ENCODE measurements at regions of chr11 and their contacts with region 1.

Region 1: GRCh38 chr11:73177778-73178577 is 35.9 kb upstream of the FCHSD2 start:
- DNase-seq: peak; percentile 68
- ATAC-seq: peak; percentile 99
- H3K4me3 ChIP-seq: no peak overlapping the region
- H3K27ac ChIP-seq: peak overlapping the region; percentile 0
- H3K4me1 ChIP-seq: peaks cover 44% of the 10 kb centered on the region
- H3K27me3 ChIP-seq: no peaks in the 10 kb centered on the region
- CTCF ChIP-seq: peak; percentile 82 to 95 (median 91)
- EP300 ChIP-seq: no peak
- POLR2A ChIP-seq: no peak
- RAD21 ChIP-seq: peak; percentile 99

Region 2: GRCh38 chr11:72793425-72794367 is 384.3 kb before region 1 on chr11 and contains the start of gene STARD10:
- CTCF ChIA-PET with region 1: interaction called, 16 read pairs
- POLR2A ChIA-PET with region 1: no interaction called
- RAD21 ChIA-PET with region 1: interaction called, 13 read pairs
- SMC1A ChIA-PET with region 1: interaction called, 9 read pairs
- in situ Hi-C with region 1: no loop called
- intact Hi-C with region 1: no loop called
- DNase-seq: peak; percentile 79
- ATAC-seq: peak; percentile 98
- H3K4me3 ChIP-seq: peak within 1 kb of the TSS; percentile 66
- H3K27ac ChIP-seq: peak within 1 kb of the TSS; percentile 77
- H3K4me1 ChIP-seq: peaks cover 11% of the 10 kb centered on the region
- H3K27me3 ChIP-seq: no peaks in the 10 kb centered on the region
- CTCF ChIP-seq: peak; percentile 84 to 95 (median 95)
- EP300 ChIP-seq: no peak
- POLR2A ChIP-seq: peak; percentile 81
- RAD21 ChIP-seq: peak; percentile 58
- polyA plus RNA-seq, gene STARD10: 0.15 to 0.21 TPM

Region 3: DNA sequence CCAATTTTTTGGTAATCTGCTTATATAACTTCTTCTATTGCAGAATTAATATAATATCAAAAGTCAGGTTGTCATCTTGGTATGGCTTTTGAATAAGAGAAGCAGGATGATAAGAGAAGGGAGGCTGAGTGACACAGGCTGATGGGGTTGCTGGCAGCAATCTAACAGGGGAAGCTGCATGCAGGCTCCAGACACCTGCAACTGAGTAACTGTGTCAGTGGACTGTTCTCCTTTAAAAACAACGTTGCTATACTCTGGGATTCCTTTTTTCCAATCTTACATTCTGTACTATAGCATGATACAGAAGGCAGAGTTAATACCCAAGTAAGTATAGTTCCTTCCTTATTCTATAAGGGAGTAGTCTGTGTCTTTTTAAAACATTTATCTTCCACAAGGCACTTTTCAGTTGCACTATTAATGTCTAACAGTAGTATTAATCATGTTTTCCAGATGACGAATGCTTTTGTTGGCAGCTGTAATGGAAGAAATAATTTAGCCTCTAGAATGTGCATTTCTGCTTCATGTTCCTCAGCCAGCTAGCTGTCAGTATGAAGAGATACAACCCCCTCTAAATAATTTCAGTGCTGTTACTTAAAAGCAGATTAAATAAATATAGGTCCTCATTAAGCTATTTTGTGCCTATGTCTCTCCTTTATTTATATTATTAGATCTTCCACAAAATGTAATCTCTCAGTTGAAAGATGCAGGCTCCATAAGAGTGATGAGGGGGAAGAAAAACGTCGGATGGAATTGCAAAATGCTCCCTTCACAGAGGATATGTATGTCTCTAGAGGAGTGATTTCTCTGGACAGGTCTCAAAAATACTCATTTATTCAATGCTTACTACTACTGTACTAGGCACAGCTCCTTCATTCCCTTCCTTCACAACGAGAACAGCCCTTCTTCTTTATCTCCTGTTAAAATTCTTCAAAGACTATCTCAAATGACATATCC is 313.0 kb before region 1 on chr11:
- CTCF ChIA-PET with region 1: interaction called, 14 read pairs
- POLR2A ChIA-PET with region 1: no interaction called
- RAD21 ChIA-PET with region 1: interaction called, 5 read pairs
- SMC1A ChIA-PET with region 1: interaction called, 8 read pairs
- in situ Hi-C with region 1: no loop called
- intact Hi-C with region 1: no loop called
- DNase-seq: no peak
- ATAC-seq: no peak
- H3K4me3 ChIP-seq: no peak overlapping the region
- H3K27ac ChIP-seq: no peak overlapping the region
- H3K4me1 ChIP-seq: no peaks in the 10 kb centered on the region
- H3K27me3 ChIP-seq: no peaks in the 10 kb centered on the region
- CTCF ChIP-seq: no peak
- EP300 ChIP-seq: no peak
- POLR2A ChIP-seq: no peak
- RAD21 ChIP-seq: no peak

Region 4: DNA sequence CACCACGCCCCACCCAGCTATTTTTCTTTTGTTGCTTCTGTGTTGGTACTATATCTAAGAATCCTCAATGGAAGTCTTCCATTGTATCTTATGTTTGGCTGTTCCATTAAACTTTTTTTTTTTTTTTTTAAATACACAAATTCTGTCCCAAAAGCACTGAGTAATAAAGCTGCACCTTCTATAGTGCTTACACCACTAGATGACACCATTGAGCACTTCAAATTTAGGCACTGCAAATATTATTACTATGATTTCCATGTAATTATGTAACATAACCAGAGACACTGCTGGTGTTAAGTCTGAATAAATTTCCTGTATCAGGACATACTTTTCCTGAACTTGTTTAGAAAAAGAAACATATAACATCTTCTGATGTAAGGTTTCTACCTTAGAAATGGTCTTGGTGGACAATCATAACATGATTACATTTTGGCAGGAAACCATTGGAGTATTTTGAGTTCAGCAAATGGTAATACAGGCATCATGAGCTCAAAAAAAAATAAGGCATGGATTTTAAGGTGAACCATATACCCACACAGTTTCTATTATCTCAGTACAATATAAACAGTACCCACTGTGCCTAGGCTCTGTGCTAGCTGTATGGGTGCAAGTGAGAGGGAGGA is 253.3 kb before region 1 on chr11:
- CTCF ChIA-PET with region 1: interaction called, 95 read pairs
- POLR2A ChIA-PET with region 1: interaction called, 3 read pairs
- RAD21 ChIA-PET with region 1: interaction called, 68 read pairs
- SMC1A ChIA-PET with region 1: interaction called, 32 read pairs
- in situ Hi-C with region 1: loop called (anchors 5 kb)
- intact Hi-C with region 1: loop called (anchors 2 kb)
- DNase-seq: peak; percentile 13
- ATAC-seq: peak; percentile 65
- H3K4me3 ChIP-seq: no peak overlapping the region
- H3K27ac ChIP-seq: no peak overlapping the region
- H3K4me1 ChIP-seq: no peaks in the 10 kb centered on the region
- H3K27me3 ChIP-seq: no peaks in the 10 kb centered on the region
- CTCF ChIP-seq: peak; percentile 42 to 55 (median 43); a peak in 4 of 6 replicates
- EP300 ChIP-seq: no peak
- POLR2A ChIP-seq: no peak
- RAD21 ChIP-seq: peak; percentile 76

Region 5: GRCh38 chr11:73135346-73136284 is 42.4 kb before region 1 on chr11:
- CTCF ChIA-PET with region 1: interaction called, 98 read pairs
- POLR2A ChIA-PET with region 1: interaction called, 3 read pairs
- RAD21 ChIA-PET with region 1: interaction called, 93 read pairs
- SMC1A ChIA-PET with region 1: interaction called, 926 read pairs
- in situ Hi-C with region 1: no loop called
- intact Hi-C with region 1: no loop called
- DNase-seq: no peak
- ATAC-seq: no peak
- H3K4me3 ChIP-seq: peak overlapping the region; percentile 26; the same call in 1 of the 2 replicates
- H3K27ac ChIP-seq: no peak overlapping the region
- H3K4me1 ChIP-seq: peaks cover 6% of the 10 kb centered on the region; the same call in 1 of the 2 replicates
- H3K27me3 ChIP-seq: no peaks in the 10 kb centered on the region
- CTCF ChIP-seq: no peak
- EP300 ChIP-seq: no peak
- POLR2A ChIP-seq: no peak
- RAD21 ChIP-seq: no peak

Region 6: GRCh38 chr11:73164803-73165540 is 13.0 kb before region 1 on chr11:
- CTCF ChIA-PET with region 1: interaction called, 86 read pairs
- POLR2A ChIA-PET with region 1: interaction called, 13 read pairs
- RAD21 ChIA-PET with region 1: interaction called, 120 read pairs
- SMC1A ChIA-PET with region 1: interaction called, 926 read pairs
- in situ Hi-C with region 1: no loop called
- intact Hi-C with region 1: no loop called
- DNase-seq: no peak
- ATAC-seq: peak; percentile 33; the same call in 2 of the 3 replicates
- H3K4me3 ChIP-seq: no peak overlapping the region
- H3K27ac ChIP-seq: no peak overlapping the region
- H3K4me1 ChIP-seq: peaks cover 16% of the 10 kb centered on the region
- H3K27me3 ChIP-seq: no peaks in the 10 kb centered on the region
- CTCF ChIP-seq: no peak
- EP300 ChIP-seq: no peak
- POLR2A ChIP-seq: no peak
- RAD21 ChIP-seq: no peak

Region 7: GRCh38 chr11:73530109-73530508 is 352.1 kb after region 1 on chr11:
- CTCF ChIA-PET with region 1: no interaction called
- POLR2A ChIA-PET with region 1: no interaction called
- RAD21 ChIA-PET with region 1: no interaction called
- SMC1A ChIA-PET with region 1: no interaction called
- in situ Hi-C with region 1: no loop called
- intact Hi-C with region 1: no loop called
- DNase-seq: no peak
- ATAC-seq: no peak
- H3K4me3 ChIP-seq: no peak overlapping the region
- H3K27ac ChIP-seq: no peak overlapping the region
- H3K4me1 ChIP-seq: peaks cover 11% of the 10 kb centered on the region
- H3K27me3 ChIP-seq: no peaks in the 10 kb centered on the region
- CTCF ChIP-seq: peak in 1 of 3 experiments; percentile 27; a peak in 1 of 6 replicates
- EP300 ChIP-seq: no peak
- POLR2A ChIP-seq: no peak
- RAD21 ChIP-seq: no peak

Measured in GM12878 (cell line).